ENCODE measurements at regions of chr6 and their contacts with region 1.

Region 1: GRCh38 chr6:160520043-160520904 is 143.8 kb downstream of the LPA start:
- DNase-seq: peak; percentile 34 to 78 (median 62)
- ATAC-seq: peak; percentile 79 to 85 (median 82)
- H3K4me3 ChIP-seq: peak overlapping the region; percentile 66 to 90
- H3K4me3 Mint-ChIP-seq: peak overlapping the region; percentile 94 to 97 (median 94)
- H3K27ac ChIP-seq: peak overlapping the region; percentile 71
- H3K27ac Mint-ChIP-seq: peak overlapping the region; percentile 92 to 96
- H3K4me1 ChIP-seq: peaks cover 8 to 13% of the 10 kb centered on the region in 2 experiments
- H3K4me1 Mint-ChIP-seq: peaks cover 31 to 48% (median 38%) of the 10 kb centered on the region in 3 donors
- H3K27me3 ChIP-seq: peaks cover 0 to 2% of the 10 kb centered on the region in 2 experiments
- H3K27me3 Mint-ChIP-seq: peaks cover 0 to 6% of the 10 kb centered on the region in 2 donors

Region 2: GRCh38 chr6:160534050-160534696 is 13.9 kb after region 1 on chr6:
- CTCF ChIA-PET with region 1: interaction called, 9 to 31 read pairs
- POLR2A ChIA-PET with region 1: no interaction called
- DNase-seq: peak in 32 of 35 experiments; percentile 10 to 77 (median 39)
- ATAC-seq: peak; percentile 61 to 70 (median 63)
- H3K4me3 ChIP-seq: peak overlapping the region in 1 of 2 donors; percentile 30
- H3K4me3 Mint-ChIP-seq: no peak overlapping the region
- H3K27ac ChIP-seq: no peak overlapping the region
- H3K27ac Mint-ChIP-seq: no peak overlapping the region
- H3K4me1 ChIP-seq: peaks cover 0 to 7% of the 10 kb centered on the region in 2 experiments
- H3K4me1 Mint-ChIP-seq: no peaks in the 10 kb centered on the region
- H3K27me3 ChIP-seq: no peaks in the 10 kb centered on the region
- H3K27me3 Mint-ChIP-seq: peaks cover 2% of the 10 kb centered on the region in 2 donors